BJ (cell line): ENCODE measurements at regions of chr6 and their contacts with region 1.

Region 1: GRCh38 chr6:32984605-32985389 is 16.4 kb downstream of the BRD2 start:
- DNase-seq: no peak
- H3K4me3 ChIP-seq: no peak overlapping the region
- H3K27me3 ChIP-seq: no peaks in the 10 kb centered on the region; the same call in none of the 2 replicates
- CTCF ChIP-seq: peak; percentile 87

Region 2: DNA sequence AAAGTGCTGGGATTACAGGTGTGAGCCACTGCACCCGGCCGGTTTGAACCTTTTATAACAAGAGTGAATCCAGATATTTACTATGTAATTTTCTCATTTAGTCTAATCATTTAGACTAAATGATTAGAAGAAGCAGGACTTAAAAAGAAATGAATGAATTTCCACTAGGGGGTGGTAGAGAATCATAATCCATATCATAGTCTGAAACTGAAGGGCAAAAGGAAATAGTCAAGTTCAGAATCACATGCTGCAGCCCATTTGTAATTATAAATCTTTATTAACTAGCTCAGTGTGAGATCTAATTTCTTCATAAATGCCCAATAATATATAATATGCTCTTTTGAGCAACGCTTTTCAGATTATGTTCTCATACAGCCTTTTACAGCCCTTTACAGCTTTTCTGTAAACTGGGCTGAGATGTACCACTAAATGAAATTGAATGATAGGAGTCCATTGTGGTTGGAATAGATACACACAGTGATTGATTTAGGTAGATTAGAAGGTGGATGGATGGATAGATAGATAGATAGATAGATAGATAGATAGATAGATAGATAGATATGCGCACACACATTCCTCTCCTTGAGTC is 99.0 kb before region 1 on chr6:
- CTCF ChIA-PET with region 1: interaction called, 66 read pairs
- POLR2A ChIA-PET with region 1: interaction called, 4 read pairs
- DNase-seq: peak; percentile 16
- H3K4me3 ChIP-seq: no peak overlapping the region
- H3K27me3 ChIP-seq: no peaks in the 10 kb centered on the region
- CTCF ChIP-seq: peak; percentile 45

Region 3: GRCh38 chr6:32912951-32913350 is 71.8 kb before region 1 on chr6:
- CTCF ChIA-PET with region 1: interaction called, 14 read pairs
- POLR2A ChIA-PET with region 1: no interaction called
- DNase-seq: no peak
- H3K4me3 ChIP-seq: no peak overlapping the region
- H3K27me3 ChIP-seq: no peaks in the 10 kb centered on the region
- CTCF ChIP-seq: no peak

Region 4: DNA sequence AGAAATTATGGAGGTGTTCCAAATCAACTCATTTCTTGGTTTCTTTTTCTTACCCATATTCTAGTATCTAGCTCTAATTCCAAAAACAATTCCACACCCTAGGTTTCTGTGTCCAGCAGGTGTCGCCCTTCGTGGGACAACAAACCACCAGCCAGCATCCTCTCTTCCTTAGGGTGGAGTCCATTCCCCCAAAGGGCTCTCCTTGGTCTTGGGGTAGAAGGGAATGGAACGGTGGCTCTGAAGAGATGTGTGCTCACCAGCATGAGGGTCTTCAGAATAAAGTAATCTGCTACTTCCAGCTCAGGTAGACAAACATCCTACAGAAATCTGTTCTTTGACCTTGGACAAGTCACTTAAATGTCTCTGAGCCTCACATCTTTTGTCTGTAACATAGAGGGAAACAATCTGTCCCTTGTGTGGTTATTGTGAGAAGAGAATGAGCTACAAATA is 51.1 kb before region 1 on chr6:
- CTCF ChIA-PET with region 1: interaction called, 246 read pairs
- POLR2A ChIA-PET with region 1: no interaction called
- DNase-seq: no peak
- H3K4me3 ChIP-seq: no peak overlapping the region
- H3K27me3 ChIP-seq: peaks cover 30% of the 10 kb centered on the region
- CTCF ChIP-seq: peak; percentile 82

Region 5: GRCh38 chr6:32952817-32953739 is 31.7 kb before region 1 on chr6 and contains the start of gene HLA-DMA:
- CTCF ChIA-PET with region 1: interaction called, 29 read pairs
- POLR2A ChIA-PET with region 1: no interaction called
- DNase-seq: peak; percentile 95
- H3K4me3 ChIP-seq: no peak within 1 kb of the TSS
- H3K27me3 ChIP-seq: no peaks in the 10 kb centered on the region
- CTCF ChIP-seq: peak; percentile 88
- polyA plus RNA-seq, gene HLA-DMA: 3.5 and 3.8 TPM in 2 replicates

Region 6: GRCh38 chr6:33000055-33000454 is 15.3 kb after region 1 on chr6:
- CTCF ChIA-PET with region 1: interaction called, 31 read pairs
- POLR2A ChIA-PET with region 1: no interaction called
- DNase-seq: no peak
- H3K4me3 ChIP-seq: no peak overlapping the region
- H3K27me3 ChIP-seq: peaks cover 19% of the 10 kb centered on the region
- CTCF ChIP-seq: no peak